CD8-positive, alpha-beta T cell (primary cell): ENCODE measurements at regions of chr3 and their contacts with region 1.

Region 1: DNA sequence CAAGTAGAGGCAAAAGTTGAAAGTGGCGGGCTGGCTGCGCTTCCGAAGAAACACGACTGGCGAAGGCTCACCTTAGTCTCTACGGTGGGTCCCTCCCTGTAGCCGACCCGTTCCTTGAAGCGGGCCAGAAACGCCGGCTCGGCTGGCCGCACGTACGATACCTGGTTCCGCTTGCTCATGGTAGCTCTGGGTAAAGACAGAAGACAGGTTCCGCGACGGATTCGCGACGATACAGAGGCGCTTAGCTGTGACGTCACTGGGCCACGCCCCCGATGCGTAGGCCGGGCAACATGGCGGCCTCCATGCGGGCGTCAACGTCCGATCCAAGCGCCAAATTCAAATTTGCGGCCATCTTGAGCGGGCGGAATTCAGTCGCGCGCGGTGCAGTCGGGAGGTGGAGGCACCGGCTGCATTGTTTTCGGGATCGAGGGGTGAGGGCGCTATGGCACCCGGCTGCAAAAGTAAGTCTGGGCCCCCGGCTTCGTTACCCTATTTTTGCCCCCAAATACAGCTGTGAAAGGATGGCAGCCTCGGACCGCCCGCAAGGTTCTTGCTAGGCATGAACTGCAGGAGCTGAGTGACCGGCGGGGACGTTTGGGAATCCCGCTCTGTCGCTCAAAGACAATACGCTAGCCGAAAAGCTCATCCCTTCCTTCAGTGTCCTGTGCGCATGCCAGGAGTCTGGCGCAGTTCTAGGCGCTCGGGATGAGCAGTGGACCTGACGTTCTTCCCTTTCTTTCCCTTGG is at the starts of genes KIAA1143 and KIF15:
- DNase-seq: peak; percentile 92 to 99 (median 98)
- ATAC-seq: peak; percentile 97
- H3K4me3 ChIP-seq: peak within 1 kb of the TSS; percentile 74 to 77
- H3K4me3 Mint-ChIP-seq: peak within 1 kb of the TSS; percentile 93
- H3K27ac ChIP-seq: peak within 1 kb of the TSS; percentile 78 to 81
- H3K27ac Mint-ChIP-seq: peak within 1 kb of the TSS; percentile 92
- H3K4me1 ChIP-seq: peaks cover 9% of the 10 kb centered on the region
- H3K4me1 Mint-ChIP-seq: peaks cover 40% of the 10 kb centered on the region
- H3K27me3 ChIP-seq: no peaks in the 10 kb centered on the region
- H3K27me3 Mint-ChIP-seq: peaks cover 3% of the 10 kb centered on the region
- CTCF ChIP-seq: no peak
- total RNA-seq, gene KIAA1143: 29.7 to 30.3 TPM
- total RNA-seq, gene KIF15: 0.24 to 0.64 TPM

Region 2: DNA sequence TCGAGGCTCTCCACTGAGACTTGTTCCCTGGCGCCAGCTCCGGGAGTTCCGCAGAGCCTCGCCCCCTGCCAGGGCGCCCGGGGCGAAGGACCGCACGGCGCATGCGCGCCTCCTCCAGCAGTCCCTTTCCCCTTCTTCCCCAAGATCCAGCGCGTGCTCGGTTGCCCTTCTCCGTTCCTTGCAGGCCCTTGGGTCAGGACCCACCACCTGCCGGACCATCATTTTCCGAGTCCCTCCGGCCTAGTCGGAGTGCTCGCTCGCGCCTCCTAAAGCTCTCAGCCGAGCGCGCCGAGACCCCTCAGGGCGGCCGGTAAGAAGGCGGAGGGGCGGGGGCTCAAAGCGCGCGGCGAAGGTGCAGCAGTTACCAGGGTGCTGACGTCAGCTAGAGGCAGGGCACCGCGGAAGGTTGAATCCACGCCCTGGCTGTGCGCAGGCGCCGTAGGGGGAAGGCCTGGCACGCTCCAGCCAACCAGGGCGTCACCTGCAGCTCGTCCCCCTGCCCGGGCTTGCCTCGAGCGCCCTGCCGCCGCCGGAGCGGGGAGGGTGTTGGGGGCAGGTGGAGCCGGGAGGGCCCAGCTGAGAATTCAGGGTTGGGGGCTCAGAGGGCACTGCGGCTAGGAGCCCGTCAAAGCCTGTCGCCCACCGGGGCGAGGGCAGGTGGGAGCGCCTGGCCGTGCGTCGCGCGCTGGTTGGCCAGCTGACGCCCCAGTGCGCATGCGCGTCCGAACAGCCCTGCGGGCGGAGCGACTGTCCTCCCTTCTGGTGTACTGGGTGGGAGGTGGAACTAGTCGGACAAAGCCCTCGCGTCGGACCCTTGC is 423.4 kb before region 1 on chr3 and contains the start of gene TCAIM:
- CTCF ChIA-PET with region 1: no interaction called
- POLR2A ChIA-PET with region 1: interaction called, 4 read pairs
- intact Hi-C with region 1: loop called (anchors 1 to 2 kb)
- DNase-seq: peak; percentile 97 to 100 (median 99)
- ATAC-seq: peak; percentile 92
- H3K4me3 ChIP-seq: peak within 1 kb of the TSS; percentile 76 to 91
- H3K4me3 Mint-ChIP-seq: peak within 1 kb of the TSS; percentile 93
- H3K27ac ChIP-seq: peak within 1 kb of the TSS; percentile 88 to 93
- H3K27ac Mint-ChIP-seq: peak within 1 kb of the TSS; percentile 97
- H3K4me1 ChIP-seq: peaks cover 15% of the 10 kb centered on the region
- H3K4me1 Mint-ChIP-seq: peaks cover 32% of the 10 kb centered on the region
- H3K27me3 ChIP-seq: no peaks in the 10 kb centered on the region
- H3K27me3 Mint-ChIP-seq: peaks cover 6% of the 10 kb centered on the region
- CTCF ChIP-seq: no peak
- total RNA-seq, gene TCAIM: 3.1 to 3.7 TPM

Region 3: GRCh38 chr3:44510000-44510368 is 251.6 kb before region 1 on chr3:
- CTCF ChIA-PET with region 1: no interaction called
- POLR2A ChIA-PET with region 1: interaction called, 5 read pairs
- intact Hi-C with region 1: loop called (anchors 2 kb)
- DNase-seq: peak in 4 of 9 experiments; percentile 6 to 54 (median 21)
- ATAC-seq: peak; percentile 27
- H3K4me3 ChIP-seq: peak overlapping the region; percentile 78
- H3K4me3 Mint-ChIP-seq: peak overlapping the region; percentile 96
- H3K27ac ChIP-seq: peak overlapping the region; percentile 61 to 82
- H3K27ac Mint-ChIP-seq: peak overlapping the region; percentile 96
- H3K4me1 ChIP-seq: peaks cover 22% of the 10 kb centered on the region
- H3K4me1 Mint-ChIP-seq: peaks cover 49% of the 10 kb centered on the region
- H3K27me3 ChIP-seq: no peaks in the 10 kb centered on the region
- H3K27me3 Mint-ChIP-seq: no peaks in the 10 kb centered on the region
- CTCF ChIP-seq: no peak

Region 4: DNA sequence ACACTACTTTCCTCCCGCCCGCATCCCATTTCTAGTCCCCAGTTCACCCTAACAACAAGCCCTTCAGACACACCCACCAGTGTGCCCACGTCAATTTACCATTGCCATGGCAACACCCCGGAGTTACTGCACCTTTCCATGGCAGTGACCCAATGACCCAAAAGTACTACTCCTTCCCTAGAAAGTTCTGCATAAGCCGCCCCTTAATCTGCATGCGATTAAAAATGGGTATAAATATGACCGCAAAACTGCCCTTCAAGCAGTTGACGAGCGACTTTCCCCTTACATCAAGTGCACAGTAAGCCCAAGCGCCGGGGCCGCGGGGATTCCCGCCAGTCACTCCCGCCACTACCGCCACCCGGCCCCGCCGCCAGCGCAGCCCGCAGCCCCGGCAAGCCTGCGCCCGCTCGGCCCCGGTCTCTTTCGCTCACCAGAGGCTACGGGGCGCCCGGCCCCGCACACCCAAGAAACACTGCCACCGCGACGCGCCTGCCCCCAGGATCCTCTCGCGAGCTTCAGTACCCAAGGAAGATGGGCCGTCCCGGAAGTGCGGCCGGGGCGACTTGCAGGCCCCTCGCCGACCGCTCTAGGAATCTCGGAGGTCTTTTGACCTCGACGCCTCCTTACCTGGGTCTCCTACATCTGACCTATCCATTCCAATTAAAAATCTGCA is 76.3 kb before region 1 on chr3:
- CTCF ChIA-PET with region 1: no interaction called
- POLR2A ChIA-PET with region 1: no interaction called
- intact Hi-C with region 1: loop called in 1 of 2 experiments (anchors 1 kb)
- DNase-seq: peak; percentile 8 to 77 (median 61)
- ATAC-seq: peak; percentile 74
- H3K4me3 ChIP-seq: peak overlapping the region; percentile 49 to 57
- H3K4me3 Mint-ChIP-seq: peak overlapping the region; percentile 82
- H3K27ac ChIP-seq: peak overlapping the region in 1 of 2 experiments; percentile 37
- H3K27ac Mint-ChIP-seq: peak overlapping the region; percentile 75
- H3K4me1 ChIP-seq: no peaks in the 10 kb centered on the region
- H3K4me1 Mint-ChIP-seq: peaks cover 20% of the 10 kb centered on the region
- H3K27me3 ChIP-seq: peaks cover 0 to 2% of the 10 kb centered on the region in 2 experiments
- H3K27me3 Mint-ChIP-seq: peaks cover 24% of the 10 kb centered on the region
- CTCF ChIP-seq: no peak

Region 5: GRCh38 chr3:44861412-44862220 is 100.0 kb after region 1 on chr3 and contains the start of gene TMEM42:
- CTCF ChIA-PET with region 1: no interaction called
- POLR2A ChIA-PET with region 1: no interaction called
- intact Hi-C with region 1: loop called (anchors 1 to 5 kb)
- DNase-seq: peak; percentile 72 to 96 (median 87)
- ATAC-seq: peak; percentile 89
- H3K4me3 ChIP-seq: peak within 1 kb of the TSS; percentile 86 to 92
- H3K4me3 Mint-ChIP-seq: peak within 1 kb of the TSS; percentile 87
- H3K27ac ChIP-seq: peak within 1 kb of the TSS; percentile 90 to 91
- H3K27ac Mint-ChIP-seq: peak within 1 kb of the TSS; percentile 92
- H3K4me1 ChIP-seq: peaks cover 31% of the 10 kb centered on the region
- H3K4me1 Mint-ChIP-seq: peaks cover 45% of the 10 kb centered on the region
- H3K27me3 ChIP-seq: no peaks in the 10 kb centered on the region
- H3K27me3 Mint-ChIP-seq: no peaks in the 10 kb centered on the region
- CTCF ChIP-seq: no peak
- total RNA-seq, gene TMEM42: 6.6 to 8.3 TPM

Region 6: DNA sequence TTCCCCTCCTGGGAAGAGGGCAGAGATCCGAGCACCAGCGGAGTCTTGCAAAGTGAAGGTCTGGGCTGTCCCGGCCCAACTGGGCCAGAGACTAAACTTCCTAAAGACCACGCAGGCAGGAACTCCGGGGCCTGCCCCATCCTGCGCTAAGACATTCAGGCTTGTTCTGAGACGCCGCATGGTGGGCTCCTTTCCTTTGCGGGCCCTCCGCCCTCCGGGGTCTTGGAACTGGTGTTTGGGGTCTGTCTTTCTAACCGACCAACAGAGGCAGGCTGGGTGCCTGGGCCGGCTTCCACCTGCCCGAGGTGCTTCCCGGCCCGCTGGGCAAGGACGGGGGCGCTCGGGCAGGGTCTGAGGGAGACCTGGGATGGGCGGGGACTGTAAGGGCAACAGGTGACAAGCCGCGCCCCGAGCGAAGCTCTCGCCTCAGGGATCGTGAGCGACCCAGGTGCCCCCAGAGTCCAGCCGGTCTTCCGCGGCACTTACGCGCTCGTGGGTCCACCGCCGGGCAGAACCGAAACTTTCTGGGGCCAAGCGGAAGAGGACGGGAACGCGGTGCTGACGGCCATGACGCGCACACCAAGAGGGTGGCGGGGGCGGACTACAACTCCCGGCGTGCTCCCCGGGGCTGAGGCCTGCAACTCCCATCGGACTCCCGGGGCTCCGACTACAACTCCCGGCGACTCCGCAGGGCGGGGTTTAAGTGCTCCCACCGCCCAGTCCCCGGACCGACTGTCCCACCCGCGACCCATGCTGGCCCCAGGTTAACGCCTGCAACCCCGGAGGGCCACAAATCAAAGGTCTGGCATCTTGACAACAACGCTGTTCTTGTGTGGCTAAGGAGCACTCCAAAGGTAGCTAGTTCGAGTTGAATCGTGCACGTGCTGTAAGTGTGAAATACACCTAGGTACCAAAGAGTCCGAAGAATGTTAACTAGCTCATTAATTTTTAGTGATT is 1233.9 kb after region 1 on chr3 and contains the start of gene FYCO1:
- CTCF ChIA-PET with region 1: no interaction called
- POLR2A ChIA-PET with region 1: no interaction called
- intact Hi-C with region 1: loop called in 1 of 2 experiments (anchors 5 kb)
- DNase-seq: peak; percentile 70 to 93 (median 85)
- ATAC-seq: peak; percentile 78
- H3K4me3 ChIP-seq: peak within 1 kb of the TSS; percentile 77 to 90
- H3K4me3 Mint-ChIP-seq: peak within 1 kb of the TSS; percentile 86
- H3K27ac ChIP-seq: peak within 1 kb of the TSS; percentile 77 to 93
- H3K27ac Mint-ChIP-seq: peak within 1 kb of the TSS; percentile 93
- H3K4me1 ChIP-seq: peaks cover 42% of the 10 kb centered on the region
- H3K4me1 Mint-ChIP-seq: peaks cover 44% of the 10 kb centered on the region
- H3K27me3 ChIP-seq: no peaks in the 10 kb centered on the region
- H3K27me3 Mint-ChIP-seq: no peaks in the 10 kb centered on the region
- CTCF ChIP-seq: no peak
- total RNA-seq, gene FYCO1: 16.6 to 16.7 TPM